Adrenal gland (tissue), 19 donors: ENCODE measurements at regions of chr12 and their contacts with region 1.

Region 1: GRCh38 chr12:46556105-46556559 is 183.6 kb upstream of the SLC38A2 start:
- DNase-seq: peak in 1 of 7 donors; percentile 21
- H3K4me3 ChIP-seq: peak overlapping the region in 1 of 4 donors; percentile 6
- H3K27ac ChIP-seq: peak overlapping the region; percentile 40 to 82 (median 65)
- H3K4me1 ChIP-seq: peaks cover 25 to 28% of the 10 kb centered on the region in 2 donors
- H3K27me3 ChIP-seq: no peaks in the 10 kb centered on the region
- CTCF ChIP-seq: no peak
- POLR2A ChIP-seq: peak in 1 of 2 donors; percentile 53

Region 2: DNA sequence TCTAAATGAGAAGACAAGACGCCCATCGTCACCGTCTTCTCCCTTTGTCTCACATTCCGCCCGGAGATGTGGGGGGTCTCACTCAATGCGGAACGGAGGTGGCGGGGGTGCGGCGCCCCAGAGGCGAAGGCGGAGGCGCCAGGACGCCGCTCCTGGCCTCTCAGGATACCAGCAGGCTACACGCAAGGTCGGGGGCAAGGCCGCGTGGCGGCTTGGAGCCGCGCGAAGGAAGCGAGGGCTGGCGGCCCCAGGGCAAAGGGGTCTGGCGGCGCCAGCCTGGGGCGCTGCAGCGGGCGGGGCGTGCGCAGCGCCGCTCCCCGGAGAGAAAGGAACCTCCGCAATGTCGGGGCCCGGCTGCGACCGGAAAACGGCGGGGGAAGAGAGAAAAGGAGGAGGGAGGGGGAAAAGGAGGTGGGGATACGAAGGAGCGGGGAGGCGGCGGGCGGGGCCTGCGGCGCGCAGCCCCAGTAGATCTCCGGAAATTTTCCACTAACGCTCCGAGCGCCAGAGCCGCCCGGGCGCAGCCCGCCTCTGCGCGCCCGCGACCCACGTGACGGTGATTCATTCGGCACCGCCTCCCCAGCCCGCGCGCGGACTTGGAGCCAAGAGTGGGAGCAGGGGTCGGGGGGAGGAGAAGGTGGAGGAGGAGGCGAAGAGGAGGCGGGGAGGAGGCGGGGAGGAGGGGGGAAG is 173.0 kb before region 1 on chr12:
- intact Hi-C with region 1: loop called (anchors 10 kb)
- DNase-seq: peak; percentile 97 to 98 (median 98)
- H3K4me3 ChIP-seq: peak overlapping the region; percentile 63 to 87 (median 80)
- H3K27ac ChIP-seq: peak overlapping the region; percentile 96 to 100 (median 99)
- H3K4me1 ChIP-seq: peaks cover 33 to 48% of the 10 kb centered on the region in 2 donors
- H3K27me3 ChIP-seq: no peaks in the 10 kb centered on the region
- CTCF ChIP-seq: peak in 4 of 6 experiments; percentile 10 to 31 (median 22)
- POLR2A ChIP-seq: peak; percentile 66 to 84